CD4-positive, alpha-beta T cell (primary cell): ENCODE measurements at regions of chr6 and their contacts with region 1.

Region 1: GRCh38 chr6:26045065-26045927 is 41.9 kb upstream of the HFE start:
- DNase-seq: peak; percentile 49 to 96 (median 74)
- ATAC-seq: peak; percentile 55
- H3K4me3 ChIP-seq: peak overlapping the region; percentile 70
- H3K4me3 Mint-ChIP-seq: peak overlapping the region; percentile 97
- H3K27ac ChIP-seq: peak overlapping the region; percentile 71 to 91
- H3K27ac Mint-ChIP-seq: peak overlapping the region; percentile 94
- H3K4me1 ChIP-seq: peaks cover 21% of the 10 kb centered on the region
- H3K4me1 Mint-ChIP-seq: peaks cover 28% of the 10 kb centered on the region
- H3K27me3 ChIP-seq: no peaks in the 10 kb centered on the region
- H3K27me3 Mint-ChIP-seq: no peaks in the 10 kb centered on the region
- CTCF ChIP-seq: no peak

Region 2: DNA sequence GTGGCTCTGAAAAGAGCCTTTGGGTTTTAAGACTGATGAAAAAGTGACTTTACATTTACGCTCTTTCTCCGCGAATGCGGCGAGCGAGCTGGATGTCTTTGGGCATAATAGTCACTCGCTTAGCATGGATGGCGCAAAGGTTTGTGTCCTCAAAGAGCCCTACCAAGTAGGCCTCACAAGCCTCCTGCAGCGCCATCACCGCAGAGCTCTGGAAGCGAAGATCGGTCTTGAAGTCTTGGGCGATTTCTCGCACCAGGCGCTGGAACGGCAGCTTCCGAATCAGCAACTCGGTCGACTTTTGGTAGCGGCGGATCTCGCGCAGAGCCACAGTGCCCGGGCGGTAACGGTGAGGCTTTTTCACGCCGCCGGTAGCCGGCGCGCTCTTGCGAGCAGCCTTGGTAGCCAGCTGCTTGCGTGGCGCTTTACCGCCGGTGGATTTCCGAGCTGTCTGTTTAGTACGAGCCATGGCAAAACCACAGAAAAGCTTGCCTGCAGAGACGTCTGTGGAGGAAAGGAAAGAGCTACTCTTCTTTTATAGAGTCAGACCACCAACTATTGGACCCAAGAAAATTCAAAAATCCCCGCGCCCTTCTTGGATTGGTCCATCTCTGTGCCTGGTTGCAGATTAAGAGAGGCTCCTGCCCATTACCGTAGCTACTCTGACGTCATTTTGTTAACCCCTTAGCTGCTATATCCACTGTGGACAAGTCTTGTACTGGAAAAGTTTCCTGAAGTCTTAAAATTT is 13.5 kb before region 1 on chr6:
- CTCF ChIA-PET with region 1: interaction called, 40 read pairs
- POLR2A ChIA-PET with region 1: interaction called, 919 read pairs
- intact Hi-C with region 1: loop called (anchors 1 kb)
- DNase-seq: peak; percentile 73 to 94 (median 81)
- ATAC-seq: peak; percentile 65
- H3K4me3 ChIP-seq: peak overlapping the region; percentile 64
- H3K4me3 Mint-ChIP-seq: peak overlapping the region; percentile 97
- H3K27ac ChIP-seq: peak overlapping the region; percentile 42 to 72
- H3K27ac Mint-ChIP-seq: peak overlapping the region; percentile 99
- H3K4me1 ChIP-seq: peaks cover 35% of the 10 kb centered on the region
- H3K4me1 Mint-ChIP-seq: peaks cover 46% of the 10 kb centered on the region
- H3K27me3 ChIP-seq: no peaks in the 10 kb centered on the region
- H3K27me3 Mint-ChIP-seq: no peaks in the 10 kb centered on the region
- CTCF ChIP-seq: peak; percentile 22

Region 3: DNA sequence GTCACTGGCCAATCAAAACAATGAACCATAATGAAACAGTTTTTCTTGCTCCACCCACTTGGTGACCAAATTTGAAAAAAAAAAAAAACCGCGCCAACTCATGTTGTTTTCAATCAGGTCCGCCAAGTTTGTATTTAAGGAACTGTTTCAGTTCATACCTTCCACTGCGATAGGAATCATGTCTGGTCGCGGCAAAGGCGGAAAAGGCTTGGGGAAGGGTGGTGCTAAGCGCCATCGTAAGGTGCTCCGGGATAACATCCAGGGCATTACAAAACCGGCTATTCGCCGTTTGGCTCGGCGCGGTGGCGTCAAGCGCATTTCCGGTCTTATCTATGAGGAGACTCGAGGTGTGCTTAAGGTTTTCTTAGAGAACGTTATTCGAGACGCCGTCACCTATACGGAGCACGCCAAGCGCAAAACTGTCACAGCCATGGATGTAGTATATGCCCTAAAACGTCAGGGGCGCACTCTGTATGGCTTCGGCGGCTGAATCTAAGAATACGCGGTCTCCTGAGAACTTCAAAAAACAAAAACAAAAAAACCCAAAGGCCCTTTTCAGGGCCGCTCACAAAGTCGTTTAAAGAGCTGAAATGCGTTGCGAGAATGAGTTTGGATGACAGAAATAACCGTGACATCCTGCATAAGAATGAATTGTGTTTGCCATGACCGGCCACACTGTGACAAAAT is 58.6 kb after region 1 on chr6:
- CTCF ChIA-PET with region 1: interaction called, 4 read pairs
- POLR2A ChIA-PET with region 1: interaction called, 87 read pairs
- intact Hi-C with region 1: no loop called
- DNase-seq: peak; percentile 84 to 96 (median 90)
- ATAC-seq: peak; percentile 88
- H3K4me3 ChIP-seq: peak overlapping the region; percentile 58
- H3K4me3 Mint-ChIP-seq: peak overlapping the region; percentile 94
- H3K27ac ChIP-seq: peak overlapping the region; percentile 83 to 85
- H3K27ac Mint-ChIP-seq: peak overlapping the region; percentile 99
- H3K4me1 ChIP-seq: peaks cover 16% of the 10 kb centered on the region
- H3K4me1 Mint-ChIP-seq: peaks cover 13% of the 10 kb centered on the region
- H3K27me3 ChIP-seq: no peaks in the 10 kb centered on the region
- H3K27me3 Mint-ChIP-seq: peaks cover 5% of the 10 kb centered on the region
- CTCF ChIP-seq: peak; percentile 58

Region 4: GRCh38 chr6:26204332-26205165 is 159.3 kb after region 1 on chr6:
- CTCF ChIA-PET with region 1: no interaction called
- POLR2A ChIA-PET with region 1: interaction called, 197 read pairs
- intact Hi-C with region 1: no loop called
- DNase-seq: peak; percentile 73 to 98 (median 80)
- ATAC-seq: peak; percentile 69
- H3K4me3 ChIP-seq: peak overlapping the region; percentile 68
- H3K4me3 Mint-ChIP-seq: no peak overlapping the region
- H3K27ac ChIP-seq: peak overlapping the region; percentile 89 to 90
- H3K27ac Mint-ChIP-seq: no peak overlapping the region
- H3K4me1 ChIP-seq: peaks cover 34% of the 10 kb centered on the region
- H3K4me1 Mint-ChIP-seq: peaks cover 8% of the 10 kb centered on the region
- H3K27me3 ChIP-seq: no peaks in the 10 kb centered on the region
- H3K27me3 Mint-ChIP-seq: no peaks in the 10 kb centered on the region
- CTCF ChIP-seq: peak; percentile 32

Region 5: DNA sequence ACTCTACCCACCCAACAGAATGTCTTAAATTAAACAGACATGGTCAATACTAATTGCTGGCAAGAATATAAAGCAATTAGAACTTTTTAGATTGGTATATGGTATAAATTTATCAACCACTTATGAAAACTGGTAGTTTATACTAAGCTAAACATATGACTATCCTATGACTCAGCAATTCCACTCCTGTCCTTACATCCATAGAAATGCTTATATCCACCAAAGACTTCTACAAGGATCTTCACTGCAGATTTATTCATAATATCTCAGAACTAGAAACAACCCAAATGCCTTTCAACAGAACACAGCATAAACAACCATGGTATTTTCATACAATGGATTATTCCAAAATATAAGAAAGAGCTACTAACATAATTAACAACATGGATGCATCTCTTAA is 1423.0 kb after region 1 on chr6:
- CTCF ChIA-PET with region 1: no interaction called
- POLR2A ChIA-PET with region 1: no interaction called
- intact Hi-C with region 1: no loop called
- DNase-seq: no peak
- ATAC-seq: no peak
- H3K4me3 ChIP-seq: no peak overlapping the region
- H3K4me3 Mint-ChIP-seq: no peak overlapping the region
- H3K27ac ChIP-seq: no peak overlapping the region
- H3K27ac Mint-ChIP-seq: no peak overlapping the region
- H3K4me1 ChIP-seq: peaks cover 13% of the 10 kb centered on the region
- H3K4me1 Mint-ChIP-seq: peaks cover 79% of the 10 kb centered on the region
- H3K27me3 ChIP-seq: no peaks in the 10 kb centered on the region
- H3K27me3 Mint-ChIP-seq: no peaks in the 10 kb centered on the region
- CTCF ChIP-seq: no peak

Region 6: GRCh38 chr6:27825025-27825793 is 1779.9 kb after region 1 on chr6:
- CTCF ChIA-PET with region 1: no interaction called
- POLR2A ChIA-PET with region 1: interaction called, 10 read pairs
- intact Hi-C with region 1: no loop called
- DNase-seq: peak in 2 of 14 experiments; percentile 27 to 38
- ATAC-seq: no peak
- H3K4me3 ChIP-seq: peak overlapping the region; percentile 82
- H3K4me3 Mint-ChIP-seq: peak overlapping the region; percentile 90
- H3K27ac ChIP-seq: peak overlapping the region; percentile 77 to 87
- H3K27ac Mint-ChIP-seq: peak overlapping the region; percentile 99
- H3K4me1 ChIP-seq: peaks cover 8% of the 10 kb centered on the region
- H3K4me1 Mint-ChIP-seq: peaks cover 38% of the 10 kb centered on the region
- H3K27me3 ChIP-seq: no peaks in the 10 kb centered on the region
- H3K27me3 Mint-ChIP-seq: no peaks in the 10 kb centered on the region
- CTCF ChIP-seq: no peak